MCF 10A (cell line): ENCODE measurements at regions of chr16 and their contacts with region 1.

Region 1: GRCh38 chr16:21626659-21627277 is 25.6 kb downstream of the IGSF6 start:
- DNase-seq: peak; percentile 90
- H3K4me3 Mint-ChIP-seq: no peak overlapping the region
- H3K27ac Mint-ChIP-seq: peak overlapping the region; percentile 70
- H3K4me1 Mint-ChIP-seq: peaks cover 11% of the 10 kb centered on the region
- H3K27me3 Mint-ChIP-seq: no peaks in the 10 kb centered on the region
- CTCF ChIP-seq: no peak

Region 2: GRCh38 chr16:21565861-21566669 is 60.7 kb before region 1 on chr16:
- CTCF ChIA-PET with region 1: no interaction called
- POLR2A ChIA-PET with region 1: no interaction called
- intact Hi-C with region 1: no loop called
- DNase-seq: no peak
- H3K4me3 Mint-ChIP-seq: no peak overlapping the region
- H3K27ac Mint-ChIP-seq: no peak overlapping the region
- H3K4me1 Mint-ChIP-seq: no peaks in the 10 kb centered on the region
- H3K27me3 Mint-ChIP-seq: no peaks in the 10 kb centered on the region
- CTCF ChIP-seq: no peak

Region 3: GRCh38 chr16:21584817-21585216 is 42.0 kb before region 1 on chr16:
- CTCF ChIA-PET with region 1: interaction called, 11 read pairs
- POLR2A ChIA-PET with region 1: no interaction called
- intact Hi-C with region 1: no loop called
- DNase-seq: no peak
- H3K4me3 Mint-ChIP-seq: no peak overlapping the region
- H3K27ac Mint-ChIP-seq: no peak overlapping the region
- H3K4me1 Mint-ChIP-seq: no peaks in the 10 kb centered on the region
- H3K27me3 Mint-ChIP-seq: no peaks in the 10 kb centered on the region
- CTCF ChIP-seq: no peak

Region 4: DNA sequence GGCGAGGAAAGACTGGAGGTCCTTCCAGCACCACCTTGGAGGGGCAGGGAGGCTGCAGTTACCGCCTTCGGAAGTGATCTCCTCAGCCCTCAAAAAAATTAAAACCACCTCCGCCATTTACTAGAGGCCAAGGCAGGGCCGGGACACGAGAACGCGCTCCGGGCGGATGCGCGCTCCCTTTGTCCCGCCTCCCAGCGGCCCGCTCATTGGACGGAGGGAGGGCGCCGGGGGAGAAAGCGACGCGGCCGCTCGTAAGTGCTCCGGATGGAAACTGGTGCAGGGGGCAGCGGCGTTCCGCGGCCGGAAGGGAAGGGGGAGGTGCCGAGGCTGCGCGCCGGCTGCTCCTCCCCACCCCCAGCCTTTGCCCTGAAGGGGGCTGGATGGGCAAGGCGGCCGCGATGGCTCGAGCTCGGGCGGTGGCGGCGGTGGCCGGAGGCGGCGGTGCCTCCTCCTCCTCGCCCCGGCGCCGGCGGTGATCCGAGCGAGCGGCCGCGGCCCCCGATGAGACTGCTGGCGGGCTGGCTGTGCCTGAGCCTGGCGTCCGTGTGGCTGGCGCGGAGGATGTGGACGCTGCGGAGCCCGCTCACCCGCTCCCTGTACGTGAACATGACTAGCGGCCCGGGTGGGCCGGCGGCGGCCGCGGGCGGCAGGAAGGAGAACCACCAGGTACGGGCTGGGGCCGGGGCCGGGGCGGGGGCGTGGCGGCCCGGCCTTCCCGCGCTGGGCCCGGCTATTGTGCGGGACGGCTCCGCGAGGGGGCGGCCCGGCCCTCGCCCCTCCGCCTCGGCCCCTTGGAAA is 27.3 kb before region 1 on chr16 and contains the start of gene METTL9:
- CTCF ChIA-PET with region 1: no interaction called
- POLR2A ChIA-PET with region 1: interaction called, 6 read pairs
- intact Hi-C with region 1: loop called (anchors 1 kb)
- DNase-seq: peak; percentile 95
- H3K4me3 Mint-ChIP-seq: peak within 1 kb of the TSS; percentile 83
- H3K27ac Mint-ChIP-seq: peak within 1 kb of the TSS; percentile 92
- H3K4me1 Mint-ChIP-seq: peaks cover 21% of the 10 kb centered on the region
- H3K27me3 Mint-ChIP-seq: no peaks in the 10 kb centered on the region
- CTCF ChIP-seq: no peak
- total RNA-seq, gene METTL9: 63.9 and 67.6 TPM in 2 replicates

Region 5: GRCh38 chr16:21611546-21612384 is 15.0 kb before region 1 on chr16:
- CTCF ChIA-PET with region 1: interaction called, 6 read pairs
- POLR2A ChIA-PET with region 1: interaction called, 18 read pairs
- intact Hi-C with region 1: no loop called
- DNase-seq: peak; percentile 47
- H3K4me3 Mint-ChIP-seq: peak overlapping the region; percentile 22
- H3K27ac Mint-ChIP-seq: peak overlapping the region; percentile 78
- H3K4me1 Mint-ChIP-seq: peaks cover 21% of the 10 kb centered on the region
- H3K27me3 Mint-ChIP-seq: no peaks in the 10 kb centered on the region
- CTCF ChIP-seq: no peak